Ascending aorta (tissue), 2 donors: ENCODE measurements at regions of chr15 and their contacts with region 1.

Region 1: GRCh38 chr15:90463381-90463780 is 66.3 kb upstream of the CRTC3 start:
- DNase-seq: no peak
- H3K4me3 ChIP-seq: no peak overlapping the region
- H3K27ac ChIP-seq: peak overlapping the region; percentile 72 to 79
- H3K4me1 ChIP-seq: peaks cover 22 to 46% of the 10 kb centered on the region in 2 donors
- H3K27me3 ChIP-seq: no peaks in the 10 kb centered on the region
- CTCF ChIP-seq: peak in 2 of 3 experiments; percentile 25 to 26

Region 2: DNA sequence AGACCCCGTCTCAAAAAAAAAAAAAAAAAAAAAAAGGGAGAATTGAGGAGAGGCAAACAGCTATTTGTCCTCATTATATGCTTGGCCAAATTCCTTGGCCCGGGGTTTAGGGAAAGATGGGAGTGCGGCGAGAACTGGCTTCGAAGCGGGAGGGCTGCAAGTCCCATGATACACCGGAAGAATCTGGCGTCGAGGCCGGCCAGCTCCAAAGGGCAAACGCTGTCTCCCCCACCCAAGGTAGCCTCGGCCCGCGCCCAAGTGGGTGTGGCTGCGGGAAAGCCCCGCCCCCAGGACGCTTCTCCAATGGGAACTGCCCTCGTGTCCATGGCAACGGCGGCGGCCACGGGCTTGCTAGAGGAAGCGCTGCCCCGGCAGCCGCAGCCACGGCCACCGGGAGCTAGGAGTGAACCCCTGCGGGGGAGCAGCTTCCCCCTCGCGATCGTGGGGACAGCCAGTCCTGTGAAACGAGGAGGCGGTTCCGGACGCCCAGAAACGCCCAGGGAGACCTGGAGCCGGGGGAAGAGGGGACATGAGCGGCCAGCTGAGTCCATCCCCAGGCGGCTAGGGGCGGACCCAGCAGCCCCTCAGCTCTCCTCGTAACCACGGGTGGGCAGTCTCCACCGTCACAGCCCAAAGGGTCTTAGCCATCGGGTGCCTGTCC is 214.0 kb before region 1 on chr15 and contains the start of gene TTLL13:
- intact Hi-C with region 1: no loop called
- DNase-seq: peak; percentile 79 to 95
- H3K4me3 ChIP-seq: peak within 1 kb of the TSS; percentile 55 to 63
- H3K27ac ChIP-seq: no peak within 1 kb of the TSS
- H3K4me1 ChIP-seq: peaks cover 0 to 3% of the 10 kb centered on the region in 2 donors
- H3K27me3 ChIP-seq: no peaks in the 10 kb centered on the region
- CTCF ChIP-seq: no peak
- total RNA-seq, gene TTLL13: not detected

Region 3: DNA sequence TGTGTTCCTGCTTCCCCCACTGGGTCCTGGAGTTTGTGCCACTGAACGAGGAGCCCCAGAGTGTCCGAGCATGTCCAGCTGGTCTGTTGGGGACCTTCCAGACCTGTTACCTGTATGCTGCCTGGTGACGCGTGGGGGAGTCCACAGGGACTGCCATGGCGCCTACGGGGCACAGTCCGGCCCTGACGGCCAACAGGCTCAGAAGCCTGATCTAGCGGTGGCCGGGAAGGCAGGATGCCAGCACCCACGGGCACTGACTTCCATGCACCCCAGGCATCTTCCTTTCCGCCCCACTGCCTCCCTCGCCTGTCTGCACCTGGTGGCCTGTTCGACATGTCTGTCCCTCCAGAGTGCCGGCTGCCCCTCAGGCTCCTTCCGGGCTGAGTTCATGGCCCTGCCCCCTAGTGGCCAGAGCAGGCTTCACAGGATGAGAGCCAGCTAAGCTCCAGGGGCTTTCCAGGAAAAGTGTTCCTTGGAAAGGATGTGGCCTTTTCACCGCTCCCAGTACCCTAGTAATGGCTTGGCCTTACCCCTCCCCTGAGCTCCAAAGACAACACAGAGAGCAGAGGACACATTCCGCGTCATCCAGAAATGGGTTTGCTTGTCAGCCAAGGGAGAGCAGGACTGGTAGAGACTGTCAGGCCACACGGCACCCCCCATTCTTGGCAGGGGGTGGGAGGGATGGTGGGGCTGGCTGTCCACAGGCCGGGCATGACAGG is 162.2 kb before region 1 on chr15:
- intact Hi-C with region 1: no loop called
- DNase-seq: peak in 1 of 2 donors; percentile 80
- H3K4me3 ChIP-seq: no peak overlapping the region
- H3K27ac ChIP-seq: peak overlapping the region; percentile 69 to 74
- H3K4me1 ChIP-seq: peaks cover 8 to 15% of the 10 kb centered on the region in 2 donors
- H3K27me3 ChIP-seq: no peaks in the 10 kb centered on the region
- CTCF ChIP-seq: peak; percentile 37 to 73 (median 44)

Region 4: DNA sequence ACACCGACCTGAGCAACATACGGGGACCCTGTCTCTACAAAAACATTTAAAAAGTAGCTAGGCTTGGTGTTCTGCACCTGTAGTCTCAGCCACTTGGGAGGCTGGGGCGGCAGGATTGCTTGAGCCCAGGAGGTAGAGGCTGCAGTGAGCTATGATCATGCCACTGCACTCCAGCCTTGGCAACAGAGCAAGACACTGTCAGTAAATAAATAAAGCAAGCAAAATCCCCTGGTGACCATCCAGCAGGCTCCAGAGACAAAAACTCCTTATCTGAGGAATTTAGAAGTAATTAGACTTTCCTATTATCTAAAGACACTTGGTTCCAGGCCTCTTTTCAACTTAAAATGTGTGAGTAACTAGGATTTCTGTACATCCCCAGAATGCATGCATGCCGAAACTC is 140.8 kb before region 1 on chr15:
- intact Hi-C with region 1: no loop called
- DNase-seq: peak in 1 of 2 donors; percentile 37
- H3K4me3 ChIP-seq: no peak overlapping the region
- H3K27ac ChIP-seq: no peak overlapping the region
- H3K4me1 ChIP-seq: peaks cover 2 to 5% of the 10 kb centered on the region in 2 donors
- H3K27me3 ChIP-seq: no peaks in the 10 kb centered on the region
- CTCF ChIP-seq: no peak

Region 5: DNA sequence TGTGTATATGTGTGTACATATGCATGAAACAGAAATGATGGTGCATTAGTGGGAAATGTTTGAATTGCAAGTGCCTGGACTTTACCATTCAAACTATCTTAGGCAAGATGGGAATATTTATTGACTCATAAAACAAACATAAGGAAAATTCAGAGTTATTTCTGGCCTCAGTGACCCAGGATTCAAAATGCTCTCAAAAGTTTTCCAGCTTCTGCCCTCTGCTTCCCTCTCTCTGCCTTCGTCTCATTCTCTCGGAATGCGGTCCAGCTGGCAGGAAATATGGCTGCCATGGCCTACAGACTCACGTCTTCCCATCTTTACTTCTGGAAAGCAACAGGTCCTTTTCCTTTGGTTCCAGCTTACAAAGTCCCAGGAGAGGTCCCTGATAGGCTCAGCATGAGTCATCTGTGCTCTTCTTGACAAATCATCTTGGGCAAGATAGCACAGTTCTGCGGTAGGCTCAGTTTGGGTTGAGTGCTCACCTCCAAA is 120.0 kb before region 1 on chr15:
- intact Hi-C with region 1: loop called (anchors 5 kb)
- DNase-seq: peak in 1 of 2 donors; percentile 73
- H3K4me3 ChIP-seq: no peak overlapping the region
- H3K27ac ChIP-seq: peak overlapping the region; percentile 66 to 75
- H3K4me1 ChIP-seq: peaks cover 9 to 18% of the 10 kb centered on the region in 2 donors
- H3K27me3 ChIP-seq: no peaks in the 10 kb centered on the region
- CTCF ChIP-seq: no peak

Region 6: DNA sequence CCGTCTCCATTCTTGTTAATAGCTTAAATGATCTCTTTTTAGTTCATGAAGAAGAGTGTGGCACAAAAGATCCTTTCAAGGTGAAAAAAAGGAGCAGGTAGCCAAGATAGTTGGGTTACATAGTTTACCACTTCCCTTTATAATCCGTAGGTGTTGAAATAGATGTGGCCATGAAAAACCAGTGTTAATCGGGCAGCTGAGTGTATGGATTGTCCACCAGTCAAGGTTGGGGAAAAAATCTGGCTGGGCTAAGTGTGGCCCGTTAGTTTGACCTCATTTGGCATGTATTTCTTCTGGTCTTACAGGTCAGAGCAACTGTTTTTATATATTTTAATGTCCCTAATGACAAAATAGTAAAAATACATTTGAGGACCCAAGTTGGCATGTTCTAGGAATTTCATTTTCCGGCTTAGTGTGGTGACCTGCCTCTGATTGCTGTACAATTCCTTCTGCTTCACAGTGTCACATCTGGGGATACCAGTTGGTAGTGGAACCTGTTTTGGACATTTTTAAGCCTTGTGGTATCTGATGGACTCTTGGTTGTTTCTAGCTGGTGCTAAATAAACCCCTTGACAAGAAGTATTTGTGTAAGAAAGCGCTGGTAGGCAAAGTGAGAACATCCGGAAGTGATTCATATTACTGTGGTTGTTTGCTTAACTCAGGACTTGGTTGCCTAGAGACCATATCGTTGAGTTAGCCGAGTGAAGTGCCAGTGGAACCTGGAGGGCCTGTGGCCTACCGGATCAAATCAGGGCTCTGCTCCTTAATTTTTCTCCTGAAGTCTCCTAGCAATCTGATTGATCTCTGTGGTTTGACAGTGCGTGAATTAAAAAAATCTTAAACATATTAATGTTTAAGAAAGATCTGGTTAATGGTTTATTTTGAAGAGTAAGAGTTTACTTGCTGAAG is 62.7 kb before region 1 on chr15:
- intact Hi-C with region 1: loop called (anchors 1 kb)
- DNase-seq: peak; percentile 44 to 91
- H3K4me3 ChIP-seq: peak overlapping the region; percentile 27 to 36
- H3K27ac ChIP-seq: peak overlapping the region; percentile 89 to 91
- H3K4me1 ChIP-seq: peaks cover 24 to 82% of the 10 kb centered on the region in 2 donors
- H3K27me3 ChIP-seq: no peaks in the 10 kb centered on the region
- CTCF ChIP-seq: no peak

Region 7: GRCh38 chr15:90482124-90483011 is 19.0 kb after region 1 on chr15:
- intact Hi-C with region 1: no loop called
- DNase-seq: no peak
- H3K4me3 ChIP-seq: no peak overlapping the region
- H3K27ac ChIP-seq: peak overlapping the region; percentile 47 to 49
- H3K4me1 ChIP-seq: peaks cover 0 to 4% of the 10 kb centered on the region in 2 donors
- H3K27me3 ChIP-seq: no peaks in the 10 kb centered on the region
- CTCF ChIP-seq: peak; percentile 61 to 76 (median 62)